Caco-2 (cell line): ENCODE measurements at regions of chr1 and their contacts with region 1.

Region 1: GRCh38 chr1:174982971-174983689 is 16.6 kb upstream of the CACYBP start:
- DNase-seq: peak in 1 of 2 experiments; percentile 39
- H3K4me3 ChIP-seq: no peak overlapping the region
- H3K4me3 Mint-ChIP-seq: no peak overlapping the region
- H3K27ac Mint-ChIP-seq: no peak overlapping the region
- H3K4me1 ChIP-seq: no peaks in the 10 kb centered on the region
- H3K4me1 Mint-ChIP-seq: peaks cover 6% of the 10 kb centered on the region
- H3K27me3 ChIP-seq: no peaks in the 10 kb centered on the region
- H3K27me3 Mint-ChIP-seq: no peaks in the 10 kb centered on the region
- CTCF ChIP-seq: peak; percentile 39 to 47

Region 2: DNA sequence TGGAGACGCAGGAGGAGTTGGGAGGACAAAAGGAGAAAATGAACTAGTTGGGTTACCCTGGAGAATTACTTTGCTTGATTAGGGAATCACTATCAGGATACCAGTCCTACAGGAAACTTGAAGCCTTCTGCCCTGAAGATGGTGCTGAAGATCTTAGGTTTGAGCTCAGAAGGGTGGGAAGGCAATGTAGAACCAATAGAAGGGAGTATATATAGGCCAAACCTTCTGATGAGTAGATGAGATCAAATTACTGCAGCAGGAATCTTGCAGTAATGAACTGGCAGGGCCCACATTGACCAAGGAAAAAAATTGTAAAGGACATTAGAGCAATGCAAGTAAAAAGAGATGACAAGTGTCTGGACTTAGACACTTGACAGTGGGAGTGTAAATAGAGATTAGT is 99.7 kb before region 1 on chr1:
- CTCF ChIA-PET with region 1: interaction called, 3 read pairs
- POLR2A ChIA-PET with region 1: no interaction called
- intact Hi-C with region 1: loop called (anchors 1 kb)
- DNase-seq: peak in 1 of 2 experiments; percentile 35
- H3K4me3 ChIP-seq: no peak overlapping the region
- H3K4me3 Mint-ChIP-seq: no peak overlapping the region
- H3K27ac Mint-ChIP-seq: no peak overlapping the region
- H3K4me1 ChIP-seq: no peaks in the 10 kb centered on the region
- H3K4me1 Mint-ChIP-seq: no peaks in the 10 kb centered on the region
- H3K27me3 ChIP-seq: no peaks in the 10 kb centered on the region
- H3K27me3 Mint-ChIP-seq: no peaks in the 10 kb centered on the region
- CTCF ChIP-seq: no peak

Region 3: DNA sequence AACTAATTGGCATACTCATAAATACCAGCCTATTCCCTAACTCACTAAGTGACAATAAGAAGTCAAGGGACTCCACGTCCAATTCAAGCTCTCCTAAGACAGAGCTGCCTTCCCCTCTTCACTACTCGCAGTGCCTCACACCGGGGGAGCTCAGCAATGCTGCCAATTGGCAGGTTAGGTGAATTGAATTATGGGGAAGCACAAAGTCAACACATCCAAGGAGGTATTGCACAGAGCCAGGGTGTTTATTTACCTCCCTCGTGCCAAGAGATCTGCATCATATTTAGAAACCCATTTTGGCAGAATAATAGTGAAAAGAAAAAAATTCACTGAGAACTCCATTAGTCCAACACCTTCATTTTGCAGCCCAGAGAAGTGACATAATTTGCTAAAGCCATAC is 780.7 kb after region 1 on chr1:
- CTCF ChIA-PET with region 1: no interaction called
- POLR2A ChIA-PET with region 1: no interaction called
- intact Hi-C with region 1: no loop called
- DNase-seq: no peak
- H3K4me3 ChIP-seq: no peak overlapping the region
- H3K4me3 Mint-ChIP-seq: no peak overlapping the region
- H3K27ac Mint-ChIP-seq: no peak overlapping the region
- H3K4me1 ChIP-seq: no peaks in the 10 kb centered on the region
- H3K4me1 Mint-ChIP-seq: no peaks in the 10 kb centered on the region
- H3K27me3 ChIP-seq: no peaks in the 10 kb centered on the region
- H3K27me3 Mint-ChIP-seq: peaks cover 2% of the 10 kb centered on the region
- CTCF ChIP-seq: no peak